ENCODE measurements at regions of chr4 and their contacts with region 1.

Region 1: GRCh38 chr4:163107754-163108153 is 58.9 kb downstream of the NAF1 start:
- DNase-seq: no peak
- H3K4me3 ChIP-seq: no peak overlapping the region
- H3K27ac ChIP-seq: no peak overlapping the region
- H3K4me1 ChIP-seq: no peaks in the 10 kb centered on the region
- H3K27me3 ChIP-seq: no peaks in the 10 kb centered on the region
- CTCF ChIP-seq: peak in 2 of 3 experiments; percentile 9 to 15; a peak in 2 of 4 replicates
- EP300 ChIP-seq: no peak
- POLR2A ChIP-seq: no peak
- RAD21 ChIP-seq: peak in 1 of 2 experiments; percentile 29; a peak in 2 of 4 replicates

Region 2: DNA sequence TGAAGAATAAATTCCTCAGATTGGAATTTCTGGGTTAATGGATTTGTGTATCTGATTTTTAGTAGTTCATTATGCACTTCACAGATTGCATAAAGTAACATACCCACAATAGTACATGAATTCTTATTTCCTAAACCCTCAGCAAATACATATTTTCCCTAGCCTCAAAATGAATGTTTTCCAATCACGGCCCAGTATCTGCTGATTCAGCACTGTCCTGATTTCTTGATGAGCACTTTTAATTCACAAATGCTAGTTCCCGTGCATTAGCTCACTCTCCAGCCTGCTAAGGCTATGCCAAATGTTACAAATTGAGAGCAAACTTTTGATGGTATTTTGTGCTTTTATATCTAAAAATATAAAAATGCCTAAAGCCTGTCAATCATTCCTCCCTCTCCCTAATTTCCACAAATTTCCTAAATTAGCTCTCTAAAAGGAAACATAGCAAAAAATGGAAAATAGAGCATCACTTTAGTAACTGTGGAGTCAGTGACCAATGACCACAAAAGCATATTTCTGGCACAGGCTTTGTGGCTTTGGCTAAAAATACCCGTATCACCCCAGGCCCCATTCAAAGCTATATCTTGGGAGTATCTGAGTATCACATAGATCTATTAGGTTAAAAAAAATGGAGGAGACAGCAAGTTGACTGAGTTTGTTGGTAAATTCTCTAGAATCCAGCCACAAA is 16.6 kb before region 1 on chr4:
- CTCF ChIA-PET with region 1: no interaction called
- POLR2A ChIA-PET with region 1: no interaction called
- DNase-seq: no peak
- H3K4me3 ChIP-seq: no peak overlapping the region
- H3K27ac ChIP-seq: no peak overlapping the region
- H3K4me1 ChIP-seq: no peaks in the 10 kb centered on the region
- H3K27me3 ChIP-seq: no peaks in the 10 kb centered on the region
- CTCF ChIP-seq: no peak
- EP300 ChIP-seq: no peak
- POLR2A ChIP-seq: no peak
- RAD21 ChIP-seq: no peak

Region 3: GRCh38 chr4:163121689-163122088 is 13.9 kb after region 1 on chr4:
- CTCF ChIA-PET with region 1: interaction called, 13 read pairs
- POLR2A ChIA-PET with region 1: no interaction called
- DNase-seq: no peak
- H3K4me3 ChIP-seq: no peak overlapping the region
- H3K27ac ChIP-seq: no peak overlapping the region
- H3K4me1 ChIP-seq: no peaks in the 10 kb centered on the region
- H3K27me3 ChIP-seq: no peaks in the 10 kb centered on the region
- CTCF ChIP-seq: no peak
- EP300 ChIP-seq: no peak
- POLR2A ChIP-seq: no peak
- RAD21 ChIP-seq: no peak

Region 4: DNA sequence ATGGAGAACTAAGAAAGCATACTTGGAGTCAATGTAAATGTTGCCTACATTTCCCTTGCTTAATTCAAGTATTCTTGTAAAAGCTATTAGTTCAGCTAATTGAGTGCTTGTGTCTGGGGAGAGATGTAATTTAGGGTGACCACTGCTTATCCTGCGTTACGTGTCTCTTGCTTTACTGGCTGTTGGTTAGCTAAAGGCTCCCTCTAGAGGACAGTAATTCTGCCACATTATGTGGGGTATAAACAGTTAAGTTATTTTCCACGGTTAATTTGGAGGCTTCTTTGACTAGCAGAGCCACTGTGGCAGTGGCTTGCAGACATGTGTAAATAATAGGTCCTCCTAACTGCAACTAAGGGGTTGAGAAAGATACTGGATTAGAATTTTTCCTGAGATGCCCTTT is 84.2 kb after region 1 on chr4:
- CTCF ChIA-PET with region 1: interaction called, 13 read pairs
- POLR2A ChIA-PET with region 1: no interaction called
- DNase-seq: no peak
- H3K4me3 ChIP-seq: no peak overlapping the region
- H3K27ac ChIP-seq: no peak overlapping the region
- H3K4me1 ChIP-seq: no peaks in the 10 kb centered on the region
- H3K27me3 ChIP-seq: no peaks in the 10 kb centered on the region
- CTCF ChIP-seq: peak in 2 of 3 experiments; percentile 56; a peak in 3 of 4 replicates
- EP300 ChIP-seq: no peak
- POLR2A ChIP-seq: no peak
- RAD21 ChIP-seq: peak; percentile 61 to 71